ENCODE measurements at regions of chr5 and their contacts with region 1.

Region 1: DNA sequence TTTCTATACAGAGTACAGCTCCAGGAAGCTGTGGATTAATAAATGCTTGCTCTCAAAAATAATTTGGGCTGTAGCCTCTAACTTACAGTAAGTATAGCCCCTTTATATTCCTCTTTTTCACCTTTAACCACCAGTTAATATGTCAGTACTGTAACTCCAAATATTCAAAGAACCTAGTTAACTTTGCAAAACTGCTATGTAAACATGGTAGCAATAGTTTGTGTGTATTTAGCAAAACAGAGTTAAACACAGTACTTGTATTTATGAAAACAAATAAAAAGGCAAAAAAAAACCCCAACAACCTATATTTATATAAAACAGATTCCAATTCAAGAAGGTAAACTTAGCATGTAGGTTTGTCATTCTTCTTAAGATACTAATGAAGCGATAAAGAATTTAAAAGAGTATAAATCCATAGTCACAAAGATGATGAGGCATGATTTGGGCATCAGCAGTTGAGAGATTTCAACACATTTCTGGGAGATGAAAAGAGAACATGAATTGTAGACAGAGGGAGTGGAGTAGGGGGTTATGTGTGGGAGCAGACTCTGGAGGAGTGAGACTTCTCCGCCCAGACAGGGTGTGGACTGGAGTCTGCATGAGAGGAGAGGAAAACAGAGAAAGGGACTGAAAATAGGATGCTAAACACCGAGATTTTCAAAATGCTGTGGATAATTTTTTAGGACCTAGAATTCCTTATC is 47.0 kb upstream of the F2RL1 start:
- DNase-seq: no peak
- H3K4me3 ChIP-seq: no peak overlapping the region
- H3K27ac ChIP-seq: no peak overlapping the region
- H3K4me1 ChIP-seq: no peaks in the 10 kb centered on the region
- H3K27me3 ChIP-seq: no peaks in the 10 kb centered on the region
- CTCF ChIP-seq: no peak
- EP300 ChIP-seq: no peak
- RAD21 ChIP-seq: no peak

Region 2: GRCh38 chr5:76582230-76583162 is 189.4 kb before region 1 on chr5:
- CTCF ChIA-PET with region 1: interaction called, 10 read pairs
- POLR2A ChIA-PET with region 1: no interaction called
- DNase-seq: no peak
- H3K4me3 ChIP-seq: no peak overlapping the region
- H3K27ac ChIP-seq: no peak overlapping the region
- H3K4me1 ChIP-seq: no peaks in the 10 kb centered on the region; a peak in 1 of 4 replicates
- H3K27me3 ChIP-seq: no peaks in the 10 kb centered on the region
- CTCF ChIP-seq: no peak
- EP300 ChIP-seq: no peak
- RAD21 ChIP-seq: no peak

Region 3: GRCh38 chr5:76608833-76609232 is 163.0 kb before region 1 on chr5:
- CTCF ChIA-PET with region 1: interaction called, 146 read pairs
- POLR2A ChIA-PET with region 1: no interaction called
- DNase-seq: no peak
- H3K4me3 ChIP-seq: no peak overlapping the region
- H3K27ac ChIP-seq: no peak overlapping the region
- H3K4me1 ChIP-seq: peaks cover 3 to 15% of the 10 kb centered on the region in 2 experiments
- H3K27me3 ChIP-seq: no peaks in the 10 kb centered on the region
- CTCF ChIP-seq: no peak
- EP300 ChIP-seq: no peak
- RAD21 ChIP-seq: no peak

Region 4: GRCh38 chr5:76705574-76705973 is 66.3 kb before region 1 on chr5:
- CTCF ChIA-PET with region 1: interaction called, 18 read pairs
- POLR2A ChIA-PET with region 1: no interaction called
- DNase-seq: no peak
- H3K4me3 ChIP-seq: no peak overlapping the region
- H3K27ac ChIP-seq: no peak overlapping the region
- H3K4me1 ChIP-seq: peaks cover 4 to 35% of the 10 kb centered on the region in 2 experiments; a peak in 3 of 4 replicates
- H3K27me3 ChIP-seq: no peaks in the 10 kb centered on the region
- CTCF ChIP-seq: no peak
- EP300 ChIP-seq: no peak
- RAD21 ChIP-seq: no peak

Region 5: DNA sequence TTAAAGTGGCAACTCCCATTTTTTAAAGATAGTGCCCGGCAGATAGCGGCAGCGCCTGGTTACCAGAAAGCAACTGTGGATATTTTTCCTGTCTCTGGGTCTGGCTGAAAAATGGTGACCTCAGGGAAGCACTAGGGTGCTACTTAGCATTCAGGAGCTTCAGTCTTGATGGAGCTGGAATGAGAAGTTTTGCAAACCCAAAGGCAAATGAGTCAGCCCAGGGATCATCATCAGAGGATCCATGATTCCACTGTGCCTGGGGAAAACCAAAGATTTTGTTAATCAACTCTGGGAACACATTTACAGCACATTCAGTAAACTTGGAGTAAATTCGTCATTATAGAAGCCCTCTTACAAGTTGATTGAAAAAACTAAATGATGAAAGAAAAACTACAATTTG is 29.3 kb before region 1 on chr5:
- CTCF ChIA-PET with region 1: interaction called, 16 read pairs
- POLR2A ChIA-PET with region 1: no interaction called
- DNase-seq: no peak
- H3K4me3 ChIP-seq: no peak overlapping the region
- H3K27ac ChIP-seq: peak overlapping the region in 1 of 2 experiments; percentile 32; a peak in 2 of 4 replicates
- H3K4me1 ChIP-seq: peaks cover 5% of the 10 kb centered on the region in 2 experiments; a peak in 2 of 4 replicates
- H3K27me3 ChIP-seq: no peaks in the 10 kb centered on the region
- CTCF ChIP-seq: no peak
- EP300 ChIP-seq: no peak
- RAD21 ChIP-seq: no peak

Region 6: DNA sequence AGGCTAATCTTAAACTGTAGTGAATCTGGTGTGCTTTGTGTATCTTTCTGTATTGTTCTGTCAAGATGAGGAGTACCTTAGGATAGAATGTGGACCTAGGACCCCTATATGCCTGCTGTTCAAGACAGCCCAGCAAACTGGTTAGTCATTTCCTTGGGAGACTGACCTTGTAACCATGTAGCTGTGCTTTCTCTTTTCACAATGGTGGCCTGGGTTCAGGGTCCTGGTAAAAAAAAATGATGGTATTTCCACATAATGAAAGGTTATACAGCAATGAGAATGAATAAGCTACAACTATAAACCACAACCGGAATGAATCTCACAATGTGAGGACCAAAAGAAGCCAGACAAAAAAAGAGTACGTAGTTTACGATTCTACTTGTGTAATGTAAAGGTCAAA is 10.6 kb after region 1 on chr5:
- CTCF ChIA-PET with region 1: interaction called, 20 read pairs
- POLR2A ChIA-PET with region 1: no interaction called
- DNase-seq: no peak
- H3K4me3 ChIP-seq: no peak overlapping the region
- H3K27ac ChIP-seq: no peak overlapping the region
- H3K4me1 ChIP-seq: peaks cover 0 to 5% of the 10 kb centered on the region in 2 experiments; a peak in 1 of 4 replicates
- H3K27me3 ChIP-seq: no peaks in the 10 kb centered on the region
- CTCF ChIP-seq: no peak
- EP300 ChIP-seq: no peak
- RAD21 ChIP-seq: no peak

Region 7: GRCh38 chr5:76816110-76816831 is 44.4 kb after region 1 on chr5:
- CTCF ChIA-PET with region 1: interaction called, 10 read pairs
- POLR2A ChIA-PET with region 1: no interaction called
- DNase-seq: no peak
- H3K4me3 ChIP-seq: no peak overlapping the region
- H3K27ac ChIP-seq: peak overlapping the region in 1 of 2 experiments; percentile 98; a peak in 2 of 4 replicates
- H3K4me1 ChIP-seq: peaks cover 8 to 17% of the 10 kb centered on the region in 2 experiments; a peak in 2 of 4 replicates
- H3K27me3 ChIP-seq: no peaks in the 10 kb centered on the region
- CTCF ChIP-seq: no peak
- EP300 ChIP-seq: no peak
- RAD21 ChIP-seq: no peak

Measured in SK-N-SH (cell line).